CD8-positive, alpha-beta T cell (primary cell): ENCODE measurements at regions of chr4 and their contacts with region 1.

Region 1: DNA sequence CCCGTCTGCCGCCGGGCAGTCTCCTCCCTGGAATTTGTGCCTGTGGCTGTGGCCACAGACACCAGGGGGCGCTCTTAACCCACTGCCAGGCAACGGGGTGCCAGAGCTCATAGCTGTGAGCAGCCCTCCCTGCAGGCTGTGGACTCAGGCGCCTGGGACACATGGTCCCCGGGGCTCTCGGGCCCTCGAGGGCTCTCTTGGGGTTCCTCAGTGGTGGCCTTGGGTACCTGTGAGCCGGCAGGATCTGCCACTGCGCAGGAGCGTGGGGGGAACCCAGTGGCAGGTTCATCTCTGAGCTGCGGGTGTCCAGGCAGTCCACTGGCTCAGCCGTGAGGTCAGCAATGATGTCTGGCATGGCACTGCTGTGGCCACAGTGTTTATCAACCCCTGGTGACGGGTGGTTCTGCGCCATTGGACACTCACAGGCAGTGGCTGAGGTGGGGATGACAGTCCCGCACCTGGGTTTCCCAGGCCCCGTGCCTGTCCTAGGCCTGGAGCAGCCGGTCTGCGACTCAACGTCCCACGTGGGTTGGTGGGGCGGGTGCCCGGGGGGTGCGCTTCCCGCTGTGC is 37.2 kb downstream of the PCGF3 start:
- DNase-seq: peak; percentile 53 to 87 (median 78)
- ATAC-seq: peak; percentile 90
- H3K4me3 ChIP-seq: no peak overlapping the region
- H3K4me3 Mint-ChIP-seq: no peak overlapping the region
- H3K27ac ChIP-seq: no peak overlapping the region
- H3K27ac Mint-ChIP-seq: no peak overlapping the region
- H3K4me1 ChIP-seq: no peaks in the 10 kb centered on the region
- H3K4me1 Mint-ChIP-seq: peaks cover under 1% of the 10 kb centered on the region
- H3K27me3 ChIP-seq: no peaks in the 10 kb centered on the region
- H3K27me3 Mint-ChIP-seq: no peaks in the 10 kb centered on the region
- CTCF ChIP-seq: peak; percentile 93

Region 2: GRCh38 chr4:650951-651883 is 91.6 kb before region 1 on chr4:
- CTCF ChIA-PET with region 1: no interaction called
- POLR2A ChIA-PET with region 1: no interaction called
- intact Hi-C with region 1: no loop called
- DNase-seq: no peak
- ATAC-seq: no peak
- H3K4me3 ChIP-seq: no peak overlapping the region
- H3K4me3 Mint-ChIP-seq: no peak overlapping the region
- H3K27ac ChIP-seq: no peak overlapping the region
- H3K27ac Mint-ChIP-seq: no peak overlapping the region
- H3K4me1 ChIP-seq: no peaks in the 10 kb centered on the region
- H3K4me1 Mint-ChIP-seq: peaks cover 2% of the 10 kb centered on the region
- H3K27me3 ChIP-seq: no peaks in the 10 kb centered on the region
- H3K27me3 Mint-ChIP-seq: peaks cover 5% of the 10 kb centered on the region
- CTCF ChIP-seq: no peak

Region 3: DNA sequence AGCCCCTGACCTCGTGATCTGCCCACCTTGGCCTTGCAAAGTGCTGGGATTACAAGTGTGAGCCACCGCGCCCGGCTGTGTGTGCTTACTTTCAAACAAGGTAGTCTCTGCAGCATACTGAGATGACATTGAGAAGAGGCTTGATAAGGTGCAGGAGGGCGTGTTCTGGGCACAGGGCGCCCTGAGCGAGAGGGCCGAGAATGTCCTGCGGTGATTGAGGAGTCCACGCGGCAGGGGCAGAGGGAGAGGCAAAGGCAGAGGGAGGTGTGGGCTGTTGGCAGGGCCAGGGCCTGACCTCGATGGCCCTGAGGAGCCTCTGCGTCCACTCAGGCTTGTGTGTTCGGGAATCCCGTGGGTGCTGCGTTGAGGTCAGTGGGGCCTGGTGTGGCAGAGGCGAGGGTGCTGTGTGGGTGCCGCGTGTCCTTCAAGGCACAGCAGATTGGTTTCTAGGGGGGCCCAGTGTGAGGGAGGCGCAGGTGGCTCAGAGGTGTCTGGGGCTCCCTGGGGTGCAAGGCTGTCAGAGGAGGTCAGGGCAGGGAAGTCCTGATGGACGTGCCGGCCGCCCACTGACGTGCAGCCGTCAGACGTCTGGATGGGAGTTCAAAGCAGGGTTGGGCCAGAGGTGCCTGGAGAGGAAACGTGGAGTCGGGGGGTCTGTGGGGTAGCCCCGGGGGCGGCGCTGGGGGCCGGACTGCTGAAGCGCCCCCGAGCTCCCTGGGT is 25.1 kb before region 1 on chr4:
- CTCF ChIA-PET with region 1: interaction called, 11 read pairs
- POLR2A ChIA-PET with region 1: no interaction called
- intact Hi-C with region 1: no loop called
- DNase-seq: no peak
- ATAC-seq: no peak
- H3K4me3 ChIP-seq: no peak overlapping the region
- H3K4me3 Mint-ChIP-seq: no peak overlapping the region
- H3K27ac ChIP-seq: no peak overlapping the region
- H3K27ac Mint-ChIP-seq: no peak overlapping the region
- H3K4me1 ChIP-seq: no peaks in the 10 kb centered on the region
- H3K4me1 Mint-ChIP-seq: peaks cover 12% of the 10 kb centered on the region
- H3K27me3 ChIP-seq: no peaks in the 10 kb centered on the region
- H3K27me3 Mint-ChIP-seq: no peaks in the 10 kb centered on the region
- CTCF ChIP-seq: no peak

Region 4: DNA sequence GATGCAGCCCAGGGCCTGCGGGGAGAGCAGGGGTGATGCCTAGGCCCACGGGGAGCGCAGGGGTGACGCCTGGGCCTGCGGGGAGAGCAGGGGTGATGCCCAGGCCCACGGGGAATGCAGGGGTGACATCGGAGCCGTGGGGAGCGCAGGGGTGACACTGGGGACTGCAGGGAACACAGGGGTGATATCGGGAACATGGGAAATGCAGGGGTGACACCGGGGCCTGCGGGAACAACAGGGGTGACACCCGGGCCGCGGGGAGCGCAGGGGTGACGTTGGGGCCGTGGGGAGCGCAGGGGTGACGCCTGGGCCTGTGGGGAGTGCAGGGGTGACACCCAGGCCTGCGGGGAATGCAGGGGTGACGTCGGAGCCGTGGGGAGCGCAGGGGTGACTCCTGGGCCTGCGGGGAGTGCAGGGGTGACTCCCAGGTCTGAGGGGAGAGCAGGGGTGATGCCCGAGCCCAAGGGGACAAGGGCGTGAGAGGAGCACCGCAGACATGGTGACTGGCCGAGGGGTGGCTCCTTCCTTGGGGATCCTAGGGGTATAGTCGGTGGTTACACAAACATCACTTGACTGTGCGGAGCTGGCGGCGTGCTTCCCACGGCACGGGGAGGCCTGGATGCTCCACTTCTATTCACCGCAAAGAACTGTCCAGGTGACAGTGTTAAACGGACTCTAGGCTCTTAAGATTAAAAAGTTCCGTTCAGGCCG is 151.3 kb after region 1 on chr4:
- CTCF ChIA-PET with region 1: interaction called, 6 read pairs
- POLR2A ChIA-PET with region 1: no interaction called
- intact Hi-C with region 1: loop called in 1 of 2 experiments (anchors 2 kb)
- DNase-seq: peak in 1 of 9 experiments; percentile 2
- ATAC-seq: no peak
- H3K4me3 ChIP-seq: no peak overlapping the region
- H3K4me3 Mint-ChIP-seq: no peak overlapping the region
- H3K27ac ChIP-seq: no peak overlapping the region
- H3K27ac Mint-ChIP-seq: no peak overlapping the region
- H3K4me1 ChIP-seq: no peaks in the 10 kb centered on the region
- H3K4me1 Mint-ChIP-seq: no peaks in the 10 kb centered on the region
- H3K27me3 ChIP-seq: no peaks in the 10 kb centered on the region
- H3K27me3 Mint-ChIP-seq: no peaks in the 10 kb centered on the region
- CTCF ChIP-seq: no peak

Region 5: GRCh38 chr4:973431-974397 is 230.9 kb after region 1 on chr4 and contains the start of gene DGKQ:
- CTCF ChIA-PET with region 1: no interaction called
- POLR2A ChIA-PET with region 1: no interaction called
- intact Hi-C with region 1: loop called in 1 of 2 experiments (anchors 5 kb)
- DNase-seq: peak; percentile 83 to 95 (median 89)
- ATAC-seq: peak; percentile 82
- H3K4me3 ChIP-seq: peak within 1 kb of the TSS; percentile 74 to 77
- H3K4me3 Mint-ChIP-seq: peak within 1 kb of the TSS; percentile 62
- H3K27ac ChIP-seq: peak within 1 kb of the TSS; percentile 56 to 85
- H3K27ac Mint-ChIP-seq: peak within 1 kb of the TSS; percentile 37
- H3K4me1 ChIP-seq: peaks cover 32% of the 10 kb centered on the region
- H3K4me1 Mint-ChIP-seq: peaks cover 17% of the 10 kb centered on the region
- H3K27me3 ChIP-seq: no peaks in the 10 kb centered on the region
- H3K27me3 Mint-ChIP-seq: no peaks in the 10 kb centered on the region
- CTCF ChIP-seq: no peak
- total RNA-seq, gene DGKQ: 28.2 to 29.7 TPM

Region 6: GRCh38 chr4:1011022-1011694 is 268.3 kb after region 1 on chr4 and contains the start of gene FGFRL1:
- CTCF ChIA-PET with region 1: interaction called, 6 read pairs
- POLR2A ChIA-PET with region 1: no interaction called
- intact Hi-C with region 1: loop called in 1 of 2 experiments (anchors 2 kb)
- DNase-seq: peak; percentile 83 to 94 (median 93)
- ATAC-seq: peak; percentile 55
- H3K4me3 ChIP-seq: peak within 1 kb of the TSS; percentile 65 to 86
- H3K4me3 Mint-ChIP-seq: peak within 1 kb of the TSS; percentile 89
- H3K27ac ChIP-seq: peak within 1 kb of the TSS; percentile 65 to 71
- H3K27ac Mint-ChIP-seq: peak within 1 kb of the TSS; percentile 96
- H3K4me1 ChIP-seq: peaks cover 26% of the 10 kb centered on the region
- H3K4me1 Mint-ChIP-seq: peaks cover 12% of the 10 kb centered on the region
- H3K27me3 ChIP-seq: peaks cover 0 to 9% of the 10 kb centered on the region in 2 experiments
- H3K27me3 Mint-ChIP-seq: peaks cover 25% of the 10 kb centered on the region
- CTCF ChIP-seq: no peak
- total RNA-seq, gene FGFRL1: 26.3 to 30.2 TPM

Region 7: GRCh38 chr4:1167247-1167949 is 424.6 kb after region 1 on chr4:
- CTCF ChIA-PET with region 1: no interaction called
- POLR2A ChIA-PET with region 1: no interaction called
- intact Hi-C with region 1: no loop called
- DNase-seq: peak; percentile 79 to 98 (median 91)
- ATAC-seq: peak; percentile 84
- H3K4me3 ChIP-seq: peak overlapping the region; percentile 92 to 97
- H3K4me3 Mint-ChIP-seq: peak overlapping the region; percentile 88
- H3K27ac ChIP-seq: peak overlapping the region; percentile 70 to 85
- H3K27ac Mint-ChIP-seq: peak overlapping the region; percentile 83
- H3K4me1 ChIP-seq: peaks cover 28% of the 10 kb centered on the region
- H3K4me1 Mint-ChIP-seq: peaks cover 26% of the 10 kb centered on the region
- H3K27me3 ChIP-seq: peaks cover 11 to 13% of the 10 kb centered on the region in 2 experiments
- H3K27me3 Mint-ChIP-seq: peaks cover 7% of the 10 kb centered on the region
- CTCF ChIP-seq: peak; percentile 97

Region 8: GRCh38 chr4:1351854-1352633 is 609.2 kb after region 1 on chr4:
- CTCF ChIA-PET with region 1: no interaction called
- POLR2A ChIA-PET with region 1: no interaction called
- intact Hi-C with region 1: loop called in 1 of 2 experiments (anchors 5 kb)
- DNase-seq: peak; percentile 78 to 96 (median 90)
- ATAC-seq: peak; percentile 30
- H3K4me3 ChIP-seq: no peak overlapping the region
- H3K4me3 Mint-ChIP-seq: no peak overlapping the region
- H3K27ac ChIP-seq: peak overlapping the region in 1 of 2 experiments; percentile 28
- H3K27ac Mint-ChIP-seq: peak overlapping the region; percentile 72
- H3K4me1 ChIP-seq: peaks cover 21% of the 10 kb centered on the region
- H3K4me1 Mint-ChIP-seq: peaks cover 33% of the 10 kb centered on the region
- H3K27me3 ChIP-seq: no peaks in the 10 kb centered on the region
- H3K27me3 Mint-ChIP-seq: no peaks in the 10 kb centered on the region
- CTCF ChIP-seq: peak; percentile 85